AG04450 (cell line): ENCODE measurements at regions of chr3 and their contacts with region 1.

Region 1: GRCh38 chr3:48739955-48740823 is 23.2 kb upstream of the IP6K2 start:
- DNase-seq: no peak
- H3K4me3 ChIP-seq: no peak overlapping the region
- H3K27ac ChIP-seq: peak overlapping the region; percentile 11
- H3K27me3 ChIP-seq: no peaks in the 10 kb centered on the region
- CTCF ChIP-seq: peak; percentile 87

Region 2: GRCh38 chr3:48716982-48717746 is 23.0 kb before region 1 on chr3 and contains the start of gene IP6K2:
- CTCF ChIA-PET with region 1: interaction called, 10 read pairs
- POLR2A ChIA-PET with region 1: interaction called, 8 read pairs
- DNase-seq: peak; percentile 91
- H3K4me3 ChIP-seq: peak within 1 kb of the TSS; percentile 99
- H3K27ac ChIP-seq: peak within 1 kb of the TSS; percentile 87
- H3K27me3 ChIP-seq: no peaks in the 10 kb centered on the region
- CTCF ChIP-seq: no peak
- polyA plus RNA-seq, gene IP6K2: 110 and 115 TPM in 2 replicates

Region 3: GRCh38 chr3:48727511-48727910 is 12.7 kb before region 1 on chr3:
- CTCF ChIA-PET with region 1: interaction called, 12 read pairs
- POLR2A ChIA-PET with region 1: no interaction called
- DNase-seq: no peak
- H3K4me3 ChIP-seq: no peak overlapping the region
- H3K27ac ChIP-seq: no peak overlapping the region
- H3K27me3 ChIP-seq: no peaks in the 10 kb centered on the region
- CTCF ChIP-seq: no peak

Region 4: DNA sequence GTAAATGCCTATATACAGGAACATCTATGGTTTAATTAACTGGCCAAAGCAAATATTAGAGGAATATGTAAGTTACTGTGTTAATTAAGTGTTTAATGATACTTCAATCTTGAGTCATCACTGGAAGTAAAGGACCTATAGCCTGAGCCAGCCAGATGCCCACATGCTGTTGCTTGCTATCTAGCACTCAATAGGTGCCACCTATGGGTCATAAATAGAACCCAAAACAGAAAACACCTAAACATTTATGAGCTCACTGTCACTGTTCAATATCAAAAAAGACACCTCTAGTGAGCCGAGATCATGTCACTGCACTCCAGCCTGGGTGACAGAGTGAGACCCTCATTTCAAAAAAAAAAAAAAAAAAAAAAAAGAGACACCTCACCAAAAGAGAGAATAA is 25.2 kb after region 1 on chr3:
- CTCF ChIA-PET with region 1: interaction called, 17 read pairs
- POLR2A ChIA-PET with region 1: no interaction called
- DNase-seq: no peak
- H3K4me3 ChIP-seq: no peak overlapping the region
- H3K27ac ChIP-seq: no peak overlapping the region
- H3K27me3 ChIP-seq: no peaks in the 10 kb centered on the region
- CTCF ChIP-seq: peak; percentile 18; the same call in 1 of the 2 replicates